ENCODE measurements at regions of chr7 and their contacts with region 1.

Region 1: DNA sequence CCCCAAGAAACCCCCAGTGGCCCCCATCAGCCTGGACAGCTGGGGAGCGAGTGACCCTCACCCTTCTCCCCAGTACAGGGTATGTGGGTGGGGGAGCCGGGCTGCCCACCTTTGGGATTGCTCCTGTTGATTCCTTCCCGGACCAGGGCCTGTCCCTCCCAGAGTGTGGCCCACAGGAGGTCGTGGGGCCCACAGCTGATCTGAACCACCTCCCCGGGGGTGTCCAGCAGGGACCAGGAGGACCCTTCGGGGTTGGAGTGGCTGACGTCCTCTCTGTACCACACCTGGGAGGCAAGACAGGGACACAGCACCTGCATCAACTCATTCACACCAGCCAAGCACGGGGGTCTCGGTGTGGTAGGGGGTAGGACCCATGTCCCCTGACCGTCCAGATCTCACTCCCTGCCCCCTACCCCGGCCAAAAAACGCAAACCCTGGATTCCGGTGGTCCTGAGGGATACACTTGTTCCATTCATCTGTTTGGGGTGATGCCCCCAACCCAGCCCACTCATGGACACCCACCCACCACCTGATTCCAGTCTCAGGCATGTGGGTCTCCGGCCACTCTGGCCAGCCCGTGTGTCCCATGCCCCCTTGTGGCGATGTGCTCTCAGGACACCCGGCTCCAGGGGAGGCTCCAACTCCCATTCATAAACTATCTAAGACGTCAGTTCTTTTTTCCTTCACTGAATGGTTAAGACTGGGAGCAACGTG is 10.9 kb downstream of the TECPR1 start:
- DNase-seq: peak in 2 of 3 donors; percentile 71 to 80
- ATAC-seq: peak; percentile 36 to 51
- H3K4me3 ChIP-seq: no peak overlapping the region
- H3K27ac ChIP-seq: no peak overlapping the region
- H3K4me1 ChIP-seq: no peaks in the 10 kb centered on the region
- H3K27me3 ChIP-seq: no peaks in the 10 kb centered on the region

Region 2: GRCh38 chr7:98027342-98028033 is 213.6 kb before region 1 on chr7:
- intact Hi-C with region 1: loop called in 1 of 4 experiments (anchors 5 kb)
- DNase-seq: no peak
- ATAC-seq: no peak
- H3K4me3 ChIP-seq: no peak overlapping the region
- H3K27ac ChIP-seq: no peak overlapping the region
- H3K4me1 ChIP-seq: no peaks in the 10 kb centered on the region
- H3K27me3 ChIP-seq: no peaks in the 10 kb centered on the region

Region 3: GRCh38 chr7:98329100-98329790 is 88.1 kb after region 1 on chr7:
- intact Hi-C with region 1: no loop called
- DNase-seq: peak in 2 of 3 donors; percentile 21 to 49
- ATAC-seq: peak; percentile 48 to 83
- H3K4me3 ChIP-seq: no peak overlapping the region
- H3K27ac ChIP-seq: peak overlapping the region; percentile 85
- H3K4me1 ChIP-seq: peaks cover 4% of the 10 kb centered on the region
- H3K27me3 ChIP-seq: no peaks in the 10 kb centered on the region

Measured in right cardiac atrium (tissue), 5 donors.